ENCODE measurements at regions of chr17 and their contacts with region 1.

Region 1: GRCh38 chr17:82037113-82037888 is at the start of gene DCXR:
- DNase-seq: peak; percentile 100
- H3K4me3 ChIP-seq: peak within 1 kb of the TSS; percentile 72 to 87
- H3K27ac ChIP-seq: peak within 1 kb of the TSS; percentile 74 to 92
- H3K4me1 ChIP-seq: peaks cover 7 to 27% of the 10 kb centered on the region in 2 experiments
- H3K27me3 ChIP-seq: no peaks in the 10 kb centered on the region
- CTCF ChIP-seq: peak; percentile 84
- EP300 ChIP-seq: no peak
- RAD21 ChIP-seq: peak; percentile 44
- polyA plus RNA-seq, gene DCXR: 153 and 190 TPM in 2 replicates

Region 2: DNA sequence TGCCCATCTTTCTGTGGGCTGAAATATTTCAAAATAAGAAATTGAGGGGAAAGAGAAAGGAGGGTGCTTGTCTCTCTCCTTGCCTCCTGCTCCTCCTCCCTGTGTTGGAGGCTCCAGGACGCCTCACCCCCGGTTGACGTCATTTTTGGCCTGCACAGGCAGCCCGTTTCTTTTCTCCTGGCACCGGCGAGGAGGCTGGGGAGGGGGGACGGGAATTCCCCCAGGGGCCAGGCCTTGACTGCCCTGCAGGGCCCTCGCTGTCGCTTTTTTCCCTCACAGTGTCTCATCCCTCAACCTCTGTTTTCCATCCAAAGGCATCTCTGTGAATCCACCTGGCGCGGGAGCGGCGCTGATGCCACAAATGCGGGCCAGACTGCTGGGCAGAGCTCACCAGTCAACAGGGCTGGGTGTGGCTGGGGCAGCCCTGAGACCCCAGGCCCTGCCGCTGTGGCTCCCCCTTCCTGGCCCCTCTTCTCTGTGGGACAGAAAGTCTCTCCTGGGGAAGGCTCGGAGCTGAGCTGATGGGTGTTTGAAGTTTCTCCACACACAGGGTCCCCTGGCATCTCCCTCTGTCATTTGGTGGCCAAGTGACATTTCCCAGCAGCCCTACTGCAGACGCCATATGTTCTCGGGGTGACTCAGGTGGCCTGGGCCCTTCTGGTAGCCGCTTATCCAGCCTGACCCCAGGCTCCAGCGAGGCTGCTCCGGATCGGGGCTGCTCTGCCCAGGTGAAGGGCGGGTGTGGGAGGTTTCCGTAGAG is 30.7 kb before region 1 on chr17:
- CTCF ChIA-PET with region 1: no interaction called
- POLR2A ChIA-PET with region 1: no interaction called
- DNase-seq: no peak
- H3K4me3 ChIP-seq: no peak overlapping the region
- H3K27ac ChIP-seq: peak overlapping the region in 1 of 2 experiments; percentile 63; a peak in 3 of 4 replicates
- H3K4me1 ChIP-seq: peaks cover 16 to 44% of the 10 kb centered on the region in 2 experiments; a peak in 3 of 4 replicates
- H3K27me3 ChIP-seq: no peaks in the 10 kb centered on the region
- CTCF ChIP-seq: no peak
- EP300 ChIP-seq: peak in 1 of 2 experiments; percentile 44; a peak in 1 of 4 replicates
- RAD21 ChIP-seq: no peak

Region 3: DNA sequence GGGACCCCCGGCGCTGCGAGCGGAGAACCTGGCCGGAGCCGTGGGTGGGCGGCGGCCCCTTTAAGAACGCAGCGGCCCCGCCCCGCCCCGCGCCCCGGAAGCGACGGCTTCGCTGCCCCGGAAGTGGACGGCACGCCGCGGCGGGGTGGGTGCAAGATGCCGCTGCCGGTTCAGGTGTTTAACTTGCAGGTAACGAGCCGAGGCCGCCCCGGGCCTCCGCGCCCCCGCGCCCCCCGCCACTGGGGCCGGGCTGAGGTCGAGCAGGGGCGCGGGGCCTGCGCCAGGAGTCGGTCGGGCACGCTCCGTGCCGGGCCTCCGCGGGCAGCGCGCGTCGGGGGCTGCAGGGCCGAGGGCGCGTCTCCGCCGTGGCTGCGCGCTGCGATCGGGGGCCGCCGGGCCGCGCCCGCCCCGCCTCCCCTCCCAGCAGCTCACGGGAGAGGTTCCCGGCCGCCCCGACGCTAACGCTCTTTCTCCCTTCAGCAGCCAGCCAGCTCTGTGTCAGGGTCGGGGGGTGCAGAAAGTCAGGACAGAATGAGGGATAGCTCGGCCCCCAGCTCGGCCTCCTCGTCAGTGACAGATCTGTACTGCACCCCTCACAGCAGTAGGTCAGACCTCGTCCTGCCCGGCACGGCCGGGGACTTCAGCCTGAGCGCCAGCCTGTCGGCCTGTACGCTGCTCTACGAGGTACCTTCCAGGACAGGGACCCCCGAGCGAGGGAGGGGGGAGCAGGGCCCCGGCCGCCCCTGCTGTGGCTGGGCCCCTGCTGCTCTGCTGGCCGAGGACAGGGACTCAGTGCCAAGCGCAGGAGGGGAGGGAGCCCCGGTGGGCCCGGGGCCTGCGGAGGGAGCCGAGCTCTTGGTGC is 14.7 kb after region 1 on chr17 and contains the starts of genes GPS1 and RFNG:
- CTCF ChIA-PET with region 1: interaction called, 45 read pairs
- POLR2A ChIA-PET with region 1: interaction called, 9 read pairs
- DNase-seq: peak; percentile 99
- H3K4me3 ChIP-seq: peak within 1 kb of the TSS; percentile 99 to 100
- H3K27ac ChIP-seq: peak within 1 kb of the TSS; percentile 37 to 74; a peak in 3 of 4 replicates
- H3K4me1 ChIP-seq: peaks cover 0 to 25% of the 10 kb centered on the region in 2 experiments; a peak in 2 of 4 replicates
- H3K27me3 ChIP-seq: no peaks in the 10 kb centered on the region
- CTCF ChIP-seq: no peak
- EP300 ChIP-seq: no peak; a peak in 1 of 4 replicates
- RAD21 ChIP-seq: no peak
- polyA plus RNA-seq, gene GPS1: 264 and 272 TPM in 2 replicates
- polyA plus RNA-seq, gene RFNG: 54.4 and 68.6 TPM in 2 replicates

Region 4: GRCh38 chr17:82065638-82066303 is 28.5 kb after region 1 on chr17 and contains the start of gene DUS1L:
- CTCF ChIA-PET with region 1: interaction called, 27 read pairs
- POLR2A ChIA-PET with region 1: interaction called, 7 read pairs
- DNase-seq: peak; percentile 98
- H3K4me3 ChIP-seq: peak within 1 kb of the TSS; percentile 81 to 95
- H3K27ac ChIP-seq: peak within 1 kb of the TSS in 1 of 2 experiments; percentile 51; a peak in 1 of 4 replicates
- H3K4me1 ChIP-seq: peaks cover 12 to 21% of the 10 kb centered on the region in 2 experiments; a peak in 2 of 4 replicates
- H3K27me3 ChIP-seq: no peaks in the 10 kb centered on the region
- CTCF ChIP-seq: no peak
- EP300 ChIP-seq: no peak
- RAD21 ChIP-seq: no peak
- polyA plus RNA-seq, gene DUS1L: 144 and 163 TPM in 2 replicates

Region 5: GRCh38 chr17:82077617-82078358 is 40.5 kb after region 1 on chr17:
- CTCF ChIA-PET with region 1: interaction called, 12 read pairs
- POLR2A ChIA-PET with region 1: no interaction called
- DNase-seq: no peak
- H3K4me3 ChIP-seq: no peak overlapping the region
- H3K27ac ChIP-seq: no peak overlapping the region
- H3K4me1 ChIP-seq: no peaks in the 10 kb centered on the region
- H3K27me3 ChIP-seq: no peaks in the 10 kb centered on the region
- CTCF ChIP-seq: no peak
- EP300 ChIP-seq: no peak
- RAD21 ChIP-seq: no peak

Region 6: DNA sequence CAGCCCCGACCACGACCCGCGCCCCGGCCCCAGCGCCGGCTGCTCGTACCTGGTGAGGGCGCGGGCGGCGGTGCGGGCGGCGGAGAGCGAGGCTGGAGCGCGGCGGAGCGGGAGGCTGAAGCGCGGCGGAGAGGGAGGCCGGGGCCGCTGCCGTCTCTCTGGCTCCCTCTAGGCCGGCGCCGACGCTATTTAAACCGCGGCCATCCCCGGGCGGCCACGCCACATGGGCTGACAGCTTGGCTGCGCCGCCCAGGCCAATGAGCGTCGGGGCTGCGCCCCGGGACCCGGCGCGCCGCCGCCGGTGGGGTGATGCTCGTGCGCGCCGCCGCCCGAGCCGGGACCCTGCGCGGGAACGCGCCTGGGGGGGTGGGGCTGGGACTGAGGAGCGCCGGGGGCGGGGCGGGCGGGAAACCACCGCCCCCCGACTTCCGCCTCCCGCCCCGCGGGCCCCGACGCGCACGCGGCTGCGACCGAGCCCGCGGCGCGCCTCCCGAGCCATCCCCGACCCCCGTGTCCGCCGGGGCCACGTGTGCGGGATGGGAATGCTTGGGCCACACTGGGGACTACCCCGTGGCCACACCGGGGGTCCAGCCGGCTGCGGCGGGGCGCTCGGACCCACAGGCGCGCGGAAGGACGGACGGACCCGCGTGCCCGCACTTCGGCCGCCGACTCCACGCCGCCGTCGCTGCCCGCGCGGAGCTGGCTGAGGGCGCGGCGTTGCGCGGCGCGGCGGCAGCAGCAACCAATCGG is 60.9 kb after region 1 on chr17 and contains the start of gene FASN:
- CTCF ChIA-PET with region 1: interaction called, 6 read pairs
- POLR2A ChIA-PET with region 1: interaction called, 13 read pairs
- DNase-seq: peak; percentile 100
- H3K4me3 ChIP-seq: peak within 1 kb of the TSS; percentile 86 to 94
- H3K27ac ChIP-seq: peak within 1 kb of the TSS; percentile 79 to 99
- H3K4me1 ChIP-seq: peaks cover 21 to 53% of the 10 kb centered on the region in 2 experiments
- H3K27me3 ChIP-seq: no peaks in the 10 kb centered on the region
- CTCF ChIP-seq: peak; percentile 48
- EP300 ChIP-seq: peak in 1 of 2 experiments; percentile 22; a peak in 1 of 4 replicates
- RAD21 ChIP-seq: peak; percentile 28; the same call in 1 of the 2 replicates
- polyA plus RNA-seq, gene FASN: 28.1 and 55.1 TPM in 2 replicates

Region 7: DNA sequence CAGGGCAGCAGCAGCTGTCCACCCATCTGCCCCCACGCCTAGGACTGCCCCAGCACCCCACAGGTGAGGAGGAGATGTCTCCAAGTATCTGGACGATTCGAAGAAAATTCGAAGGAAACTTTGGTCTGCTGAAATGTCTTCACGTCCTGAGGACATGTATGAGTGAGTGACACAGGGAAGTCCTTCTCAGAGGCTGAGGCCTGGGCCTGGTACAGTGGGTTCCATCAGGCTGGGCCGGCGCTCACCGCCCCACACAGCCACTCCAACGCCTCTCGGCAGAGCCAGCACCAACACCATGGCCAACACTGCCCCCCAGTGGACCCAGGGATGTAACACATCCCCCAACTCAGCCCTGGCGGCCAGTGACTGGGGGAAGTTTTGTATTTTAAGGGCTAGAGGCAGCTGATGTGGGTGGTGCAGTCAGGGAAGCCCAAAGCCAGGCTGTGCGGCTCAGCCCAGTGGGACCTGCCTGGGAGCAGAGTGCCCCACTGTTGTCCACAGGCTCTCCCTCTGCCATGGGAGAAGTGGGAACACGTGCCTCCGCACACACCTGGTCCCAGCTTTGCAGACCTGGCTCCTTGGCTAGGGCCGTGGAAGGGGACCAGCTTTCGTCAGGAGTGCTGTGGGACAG is 116.6 kb after region 1 on chr17:
- CTCF ChIA-PET with region 1: interaction called, 174 read pairs
- POLR2A ChIA-PET with region 1: interaction called, 3 read pairs
- DNase-seq: peak; percentile 97
- H3K4me3 ChIP-seq: no peak overlapping the region; a peak in 1 of 4 replicates
- H3K27ac ChIP-seq: no peak overlapping the region
- H3K4me1 ChIP-seq: no peaks in the 10 kb centered on the region
- H3K27me3 ChIP-seq: no peaks in the 10 kb centered on the region
- CTCF ChIP-seq: peak; percentile 85
- EP300 ChIP-seq: no peak
- RAD21 ChIP-seq: peak; percentile 97